Dorsolateral prefrontal cortex (tissue), 120 donors: ENCODE measurements at regions of chr7 and their contacts with region 1.

Region 1: DNA sequence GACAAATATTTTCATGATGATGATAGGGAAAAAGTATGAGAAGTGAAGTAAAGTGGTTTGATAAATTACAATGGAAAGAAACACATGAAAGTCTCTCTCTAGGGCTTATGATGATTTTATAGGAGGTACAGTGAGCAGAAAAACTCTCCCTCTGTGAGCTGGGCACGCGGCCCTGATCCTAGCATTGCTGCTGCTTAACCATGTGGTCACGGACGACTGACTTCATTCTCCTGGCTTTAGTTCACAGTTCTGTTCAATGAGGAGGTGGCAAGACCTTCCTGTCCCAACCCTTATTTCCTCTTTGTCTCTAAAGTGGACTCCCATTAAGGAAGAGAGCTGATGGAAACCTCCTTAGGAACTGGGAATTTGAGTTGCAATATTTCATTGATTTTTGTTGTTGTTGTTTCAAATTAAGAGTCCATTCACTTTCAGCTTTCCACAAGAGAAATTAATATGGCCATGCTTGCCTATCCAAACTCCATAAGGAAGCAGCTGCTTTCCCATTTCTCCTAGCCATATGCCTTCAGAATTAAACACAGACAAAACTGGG is 8.2 kb upstream of the PON3 start:
- DNase-seq: peak in 1 of 10 donors; percentile 7
- H3K4me3 ChIP-seq: no peak overlapping the region
- H3K27ac ChIP-seq: peak overlapping the region in 33 of 59 donors; percentile 1 to 76 (median 38)
- H3K27me3 ChIP-seq: no peaks in the 10 kb centered on the region
- CTCF ChIP-seq: no peak

Region 2: DNA sequence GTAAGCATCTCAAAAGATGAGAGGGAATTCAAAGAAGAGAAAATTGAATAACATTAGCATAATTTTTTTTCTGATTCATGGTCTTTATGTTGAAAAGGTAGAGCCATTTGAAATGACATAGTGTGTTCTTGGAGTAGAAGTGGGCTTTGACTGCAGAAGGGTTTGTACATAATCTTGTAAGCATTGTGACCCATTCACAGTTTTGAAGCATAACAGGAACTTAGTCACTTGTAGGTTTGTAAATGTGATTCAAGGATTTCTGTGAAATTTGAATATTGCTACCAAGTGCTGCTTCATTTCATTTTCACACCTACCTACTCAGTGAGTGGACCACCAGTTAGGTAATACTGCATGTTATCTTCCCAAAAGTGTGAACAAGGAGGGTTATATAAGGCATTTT is 148.7 kb before region 1 on chr7:
- intact Hi-C with region 1: no loop called
- DNase-seq: no peak
- H3K4me3 ChIP-seq: no peak overlapping the region
- H3K27ac ChIP-seq: no peak overlapping the region
- H3K27me3 ChIP-seq: no peaks in the 10 kb centered on the region
- CTCF ChIP-seq: no peak

Region 3: DNA sequence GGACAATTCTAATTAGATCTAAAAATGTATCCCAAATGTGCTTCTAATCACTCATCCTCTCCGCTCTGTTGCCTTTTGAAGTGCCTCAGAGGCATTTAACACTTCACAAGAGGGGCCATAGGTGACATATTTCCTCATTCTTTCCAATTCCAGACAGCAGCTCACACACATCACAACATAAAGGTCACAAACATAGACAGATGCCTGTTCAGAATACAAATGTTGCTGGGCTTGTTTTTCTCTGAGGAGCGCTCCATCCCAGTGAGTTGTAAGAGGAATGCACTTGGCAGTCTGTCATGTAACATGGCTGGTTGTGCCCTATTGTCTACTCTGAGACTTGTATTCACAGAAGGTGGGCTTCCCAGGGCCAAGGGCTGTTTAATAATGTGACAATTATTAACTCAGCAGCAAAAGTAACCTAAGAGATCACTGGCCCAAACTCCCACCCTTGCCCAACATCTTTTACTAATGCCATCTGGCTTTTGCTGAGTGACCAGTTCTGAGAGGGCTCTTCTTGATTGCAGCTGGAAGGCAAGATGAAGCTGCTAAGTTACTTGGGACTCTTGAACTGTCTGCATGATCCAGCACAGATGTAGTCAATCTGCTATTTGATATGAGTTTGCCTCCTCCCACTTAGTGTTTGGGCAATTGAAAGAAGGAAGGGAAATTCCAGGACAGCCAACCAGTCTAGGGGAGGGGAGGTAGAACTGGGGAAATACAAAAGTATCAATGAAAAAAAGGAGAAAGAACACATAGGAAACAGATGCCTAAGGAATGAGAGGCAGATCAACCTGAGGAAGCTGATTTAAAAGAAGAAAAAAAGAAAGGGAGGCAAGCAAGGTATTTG is 16.8 kb after region 1 on chr7:
- intact Hi-C with region 1: loop called in 1 of 2 experiments (anchors 2 kb)
- DNase-seq: peak in 2 of 10 donors; percentile 25 to 47
- H3K4me3 ChIP-seq: no peak overlapping the region
- H3K27ac ChIP-seq: peak overlapping the region in 53 of 59 donors; percentile 8 to 86 (median 64)
- H3K27me3 ChIP-seq: no peaks in the 10 kb centered on the region
- CTCF ChIP-seq: no peak

Region 4: DNA sequence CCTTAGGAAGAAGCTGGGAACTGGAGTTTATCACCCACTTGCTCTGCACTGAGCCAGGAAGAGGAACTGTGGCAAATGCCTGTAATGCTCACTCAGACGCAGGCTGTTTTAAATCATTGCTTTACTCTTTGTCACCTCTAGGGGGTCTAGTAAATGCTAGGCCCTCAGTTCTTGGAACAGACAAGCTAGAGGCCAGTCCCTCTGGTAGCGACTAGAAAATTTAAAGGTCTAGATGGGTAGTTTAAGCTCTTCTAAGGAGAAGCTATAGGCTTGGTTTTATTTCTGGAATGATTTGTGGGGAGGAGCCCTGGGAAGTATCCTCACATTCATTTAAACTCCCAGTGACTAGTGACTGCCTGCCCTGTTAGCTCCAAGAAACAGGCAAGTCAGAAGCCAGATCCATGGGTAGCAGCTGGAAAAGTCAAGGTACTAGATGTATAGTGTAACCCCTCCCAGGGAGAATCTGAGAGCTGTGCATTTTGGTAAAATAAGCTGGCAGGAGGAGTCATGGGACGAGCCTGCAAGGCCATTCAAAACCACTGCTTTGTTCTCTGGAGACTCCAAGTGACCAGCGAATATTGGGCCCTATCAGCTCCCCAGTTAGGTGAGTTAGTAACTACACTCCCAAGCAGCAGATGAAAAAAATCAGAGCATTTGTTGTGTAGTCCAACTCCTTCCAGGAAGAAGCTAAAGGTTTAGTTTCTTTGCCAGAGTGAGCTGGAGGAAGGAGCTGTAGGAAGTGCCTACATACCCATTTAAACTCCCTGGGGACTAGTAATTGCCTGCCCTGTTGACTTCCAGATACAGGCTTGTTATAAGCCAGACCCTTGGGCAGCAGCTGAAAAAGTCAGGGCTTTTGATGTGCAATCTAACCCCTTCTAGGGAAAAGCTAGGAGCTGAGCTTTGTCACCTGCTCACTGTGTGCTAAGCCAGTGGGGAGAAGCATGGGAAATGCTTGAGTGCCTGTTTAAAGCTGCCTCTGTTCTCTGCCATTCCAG is 436.9 kb after region 1 on chr7:
- intact Hi-C with region 1: no loop called
- DNase-seq: no peak
- H3K4me3 ChIP-seq: no peak overlapping the region
- H3K27ac ChIP-seq: no peak overlapping the region
- H3K27me3 ChIP-seq: no peaks in the 10 kb centered on the region
- CTCF ChIP-seq: no peak